AG04450 (cell line): ENCODE measurements at regions of chr14 and their contacts with region 1.

Region 1: DNA sequence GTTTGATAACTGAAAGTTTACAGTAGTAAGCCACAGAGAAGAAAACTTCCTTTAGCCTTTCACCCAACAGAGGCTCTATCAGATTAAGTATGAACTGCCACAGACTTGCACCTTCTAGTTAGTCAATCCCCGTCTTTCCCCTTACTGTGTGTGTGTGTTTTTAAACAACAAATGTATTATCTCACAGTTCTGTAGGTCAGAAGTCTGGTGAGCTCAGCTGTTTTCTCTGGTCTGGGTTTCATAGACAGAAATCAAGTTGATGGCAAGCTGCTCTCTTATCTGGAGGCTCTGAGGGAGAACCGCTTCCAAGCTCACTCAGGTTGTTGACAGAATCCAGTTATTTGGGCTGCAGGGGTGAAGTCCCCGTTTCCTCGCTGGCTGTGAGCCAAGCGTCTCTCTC is 320.5 kb downstream of the PRKD1 start:
- DNase-seq: no peak
- H3K4me3 ChIP-seq: no peak overlapping the region
- H3K27ac ChIP-seq: no peak overlapping the region
- H3K27me3 ChIP-seq: no peaks in the 10 kb centered on the region
- CTCF ChIP-seq: no peak

Region 2: GRCh38 chr14:29558516-29558915 is 48.7 kb before region 1 on chr14:
- CTCF ChIA-PET with region 1: no interaction called
- POLR2A ChIA-PET with region 1: interaction called, 10 read pairs
- DNase-seq: peak; percentile 64
- H3K4me3 ChIP-seq: no peak overlapping the region
- H3K27ac ChIP-seq: no peak overlapping the region
- H3K27me3 ChIP-seq: no peaks in the 10 kb centered on the region
- CTCF ChIP-seq: no peak

Region 3: DNA sequence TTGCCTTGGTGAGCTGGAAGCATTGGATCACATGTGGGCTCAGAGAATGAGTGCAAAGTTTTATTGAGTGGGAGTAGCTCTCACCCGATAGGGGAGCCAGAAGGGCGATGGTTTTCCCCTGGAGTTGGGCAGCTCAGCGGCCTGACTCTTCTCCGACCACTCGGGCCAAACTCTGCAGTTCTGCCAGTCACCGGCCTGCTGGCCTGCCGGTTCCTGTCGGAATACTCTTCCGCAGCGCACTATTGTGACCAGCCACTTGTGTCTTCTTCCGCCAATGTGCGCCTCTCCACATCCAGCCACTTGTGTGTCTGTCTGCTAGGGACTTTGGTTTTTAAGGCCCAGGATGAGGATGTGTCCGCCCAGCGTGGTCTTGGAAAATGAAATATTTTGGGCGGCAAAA is 363.9 kb after region 1 on chr14:
- CTCF ChIA-PET with region 1: no interaction called
- POLR2A ChIA-PET with region 1: no interaction called
- DNase-seq: no peak
- H3K4me3 ChIP-seq: no peak overlapping the region
- H3K27ac ChIP-seq: no peak overlapping the region
- H3K27me3 ChIP-seq: no peaks in the 10 kb centered on the region
- CTCF ChIP-seq: no peak